Transverse colon (tissue), 4 donors: ENCODE measurements at regions of chr6 and their contacts with region 1.

Region 1: GRCh38 chr6:152952866-152953509 is 29.9 kb downstream of the FBXO5 start:
- DNase-seq: no peak
- H3K4me3 ChIP-seq: no peak overlapping the region
- H3K27ac ChIP-seq: no peak overlapping the region
- H3K4me1 ChIP-seq: peaks cover 0 to 5% (median 0%) of the 10 kb centered on the region in 4 donors
- H3K27me3 ChIP-seq: peaks cover 17% of the 10 kb centered on the region
- CTCF ChIP-seq: peak; percentile 19 to 34 (median 30)
- EP300 ChIP-seq: no peak
- POLR2A ChIP-seq: no peak

Region 2: DNA sequence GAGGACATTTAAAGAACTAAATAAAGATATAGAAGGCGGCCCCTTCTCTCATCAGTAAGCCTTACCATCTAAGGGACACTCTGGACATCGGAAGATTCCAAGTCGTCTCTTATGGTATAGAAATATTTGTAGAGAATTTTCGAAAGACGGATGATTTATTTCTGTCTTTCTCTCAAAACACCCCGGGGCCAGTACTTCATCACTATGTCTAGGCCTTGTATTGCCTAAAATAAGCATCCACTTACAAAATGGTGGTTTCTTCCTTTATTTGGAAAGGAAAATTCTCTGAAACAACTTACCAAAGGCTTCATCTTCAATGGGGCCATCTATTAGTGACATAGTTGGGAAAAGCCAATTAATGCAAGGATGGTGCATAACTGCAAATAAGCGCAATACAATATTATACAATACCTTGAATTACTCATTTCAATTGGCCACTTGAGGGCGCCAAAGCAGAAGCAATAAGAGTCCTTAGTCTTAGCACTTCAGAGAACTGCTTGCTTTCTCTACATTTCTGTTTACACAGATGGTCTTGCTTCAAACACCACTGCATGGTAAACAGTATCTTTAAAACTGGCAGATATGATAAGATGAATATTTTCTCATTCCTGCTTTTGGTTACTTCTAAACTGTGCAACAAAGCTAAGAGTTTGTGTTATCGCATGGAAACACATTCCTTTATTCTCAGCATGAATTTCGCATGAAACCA is 89.2 kb before region 1 on chr6:
- in situ Hi-C with region 1: no loop called
- intact Hi-C with region 1: loop called (anchors 10 kb)
- DNase-seq: peak; percentile 60
- H3K4me3 ChIP-seq: no peak overlapping the region
- H3K27ac ChIP-seq: no peak overlapping the region
- H3K4me1 ChIP-seq: no peaks in the 10 kb centered on the region
- H3K27me3 ChIP-seq: no peaks in the 10 kb centered on the region
- CTCF ChIP-seq: peak; percentile 47 to 58 (median 49)
- EP300 ChIP-seq: no peak
- POLR2A ChIP-seq: no peak